ENCODE measurements at regions of chr12 and their contacts with region 1.

Region 1: GRCh38 chr12:1594261-1595025 is at the start of gene FBXL14:
- DNase-seq: peak; percentile 93
- ATAC-seq: peak; percentile 57
- H3K4me3 Mint-ChIP-seq: peak within 1 kb of the TSS; percentile 98
- H3K27ac Mint-ChIP-seq: peak within 1 kb of the TSS; percentile 93
- H3K4me1 Mint-ChIP-seq: peaks cover 38% of the 10 kb centered on the region
- H3K27me3 Mint-ChIP-seq: no peaks in the 10 kb centered on the region
- total RNA-seq, gene FBXL14: 17.0 to 17.8 TPM

Region 2: GRCh38 chr12:389139-390096 is 1205.0 kb before region 1 on chr12 and contains the start of gene KDM5A:
- CTCF ChIA-PET with region 1: no interaction called
- POLR2A ChIA-PET with region 1: no interaction called
- intact Hi-C with region 1: loop called (anchors 2 to 5 kb)
- DNase-seq: peak; percentile 94
- ATAC-seq: peak; percentile 94
- H3K4me3 Mint-ChIP-seq: peak within 1 kb of the TSS; percentile 89
- H3K27ac Mint-ChIP-seq: peak within 1 kb of the TSS; percentile 96
- H3K4me1 Mint-ChIP-seq: peaks cover 26% of the 10 kb centered on the region
- H3K27me3 Mint-ChIP-seq: no peaks in the 10 kb centered on the region
- total RNA-seq, gene KDM5A: 40.3 to 58.7 TPM

Region 3: GRCh38 chr12:569803-570434 is 1024.5 kb before region 1 on chr12:
- CTCF ChIA-PET with region 1: no interaction called
- POLR2A ChIA-PET with region 1: no interaction called
- intact Hi-C with region 1: loop called (anchors 5 to 10 kb)
- DNase-seq: peak; percentile 94
- ATAC-seq: peak; percentile 89
- H3K4me3 Mint-ChIP-seq: peak overlapping the region; percentile 74
- H3K27ac Mint-ChIP-seq: peak overlapping the region; percentile 85
- H3K4me1 Mint-ChIP-seq: peaks cover 65% of the 10 kb centered on the region
- H3K27me3 Mint-ChIP-seq: no peaks in the 10 kb centered on the region

Region 4: DNA sequence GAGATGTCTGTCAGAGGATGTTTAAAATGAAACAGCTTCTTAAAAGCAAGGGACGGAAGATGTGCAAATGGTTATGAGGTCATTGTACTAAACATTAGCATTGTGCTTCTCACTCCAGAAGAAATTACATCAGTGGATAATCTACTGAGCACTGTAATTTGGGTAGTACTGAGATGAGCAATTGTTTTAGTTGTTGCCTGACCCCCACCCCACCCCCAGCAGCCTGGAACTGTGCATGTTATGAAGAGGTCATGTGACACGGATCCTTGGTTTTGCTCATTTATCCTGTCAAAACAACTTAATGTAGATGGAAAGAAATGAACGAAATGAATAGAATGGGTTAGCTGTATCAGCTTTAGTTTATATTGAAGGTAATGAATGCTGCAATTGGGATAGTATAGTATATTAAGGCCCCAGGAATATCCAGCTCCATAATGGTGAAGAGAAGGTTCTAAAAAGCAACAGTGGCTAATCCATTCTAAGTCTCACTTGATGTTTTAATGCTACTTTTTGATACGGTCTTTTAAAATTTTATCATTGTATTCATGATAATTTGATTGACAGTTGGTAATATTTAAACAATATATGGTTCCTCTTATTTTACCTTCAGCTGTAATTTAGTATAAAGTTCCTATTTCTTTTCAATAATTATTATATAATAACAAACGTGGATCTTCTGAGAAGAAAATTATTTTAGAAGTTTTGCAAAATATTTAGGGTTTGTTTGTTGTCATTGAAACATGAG is 783.6 kb before region 1 on chr12:
- CTCF ChIA-PET with region 1: no interaction called
- POLR2A ChIA-PET with region 1: no interaction called
- intact Hi-C with region 1: loop called in 1 of 2 experiments (anchors 5 kb)
- DNase-seq: peak; percentile 84
- ATAC-seq: peak; percentile 95
- H3K4me3 Mint-ChIP-seq: peak overlapping the region; percentile 32
- H3K27ac Mint-ChIP-seq: peak overlapping the region; percentile 78
- H3K4me1 Mint-ChIP-seq: peaks cover 68% of the 10 kb centered on the region
- H3K27me3 Mint-ChIP-seq: no peaks in the 10 kb centered on the region

Region 5: DNA sequence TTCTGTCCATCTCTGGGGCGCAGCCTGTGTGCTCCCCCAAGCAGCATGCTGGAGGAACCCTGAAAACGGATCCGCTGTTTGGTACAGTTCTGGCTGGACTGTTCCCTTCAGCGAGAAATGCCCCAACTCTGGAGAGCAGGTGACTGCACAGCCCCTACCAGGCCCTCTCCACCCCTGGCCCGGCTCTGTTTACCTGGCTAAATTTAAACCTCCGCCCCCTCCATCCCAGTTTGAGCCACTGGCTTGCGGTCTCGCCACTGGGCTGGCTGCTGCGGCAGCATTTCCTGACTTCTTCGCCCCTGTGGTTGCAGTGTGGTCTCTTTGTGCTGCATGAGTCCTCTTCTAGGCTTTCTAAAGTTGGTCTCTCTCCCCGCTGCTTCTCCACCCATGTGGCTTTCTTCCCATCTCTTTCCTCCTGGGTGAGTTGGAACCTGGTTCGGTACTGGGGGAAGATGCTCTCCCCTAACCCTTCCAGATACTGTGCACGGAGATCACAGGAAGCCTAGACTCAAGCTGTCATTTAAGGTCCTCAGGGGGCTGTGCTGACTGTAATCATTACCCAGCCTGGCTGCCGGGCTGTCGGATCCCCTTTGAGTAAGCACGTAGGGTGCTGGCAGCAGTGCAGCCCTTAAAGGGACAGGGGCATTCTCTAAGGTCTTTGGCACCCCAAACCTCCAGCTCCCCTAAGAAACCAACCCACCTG is 60.7 kb before region 1 on chr12:
- CTCF ChIA-PET with region 1: interaction called, 3 read pairs
- POLR2A ChIA-PET with region 1: no interaction called
- intact Hi-C with region 1: loop called in 1 of 2 experiments (anchors 5 kb)
- DNase-seq: peak; percentile 77
- ATAC-seq: peak; percentile 85
- H3K4me3 Mint-ChIP-seq: peak overlapping the region; percentile 50
- H3K27ac Mint-ChIP-seq: no peak overlapping the region
- H3K4me1 Mint-ChIP-seq: peaks cover 32% of the 10 kb centered on the region
- H3K27me3 Mint-ChIP-seq: peaks cover 60% of the 10 kb centered on the region

Region 6: GRCh38 chr12:1605129-1606020 is 10.9 kb after region 1 on chr12:
- CTCF ChIA-PET with region 1: interaction called, 25 read pairs
- POLR2A ChIA-PET with region 1: interaction called, 3 read pairs
- intact Hi-C with region 1: no loop called
- DNase-seq: peak; percentile 70
- ATAC-seq: peak; percentile 60
- H3K4me3 Mint-ChIP-seq: peak overlapping the region; percentile 68
- H3K27ac Mint-ChIP-seq: peak overlapping the region; percentile 72
- H3K4me1 Mint-ChIP-seq: peaks cover 44% of the 10 kb centered on the region
- H3K27me3 Mint-ChIP-seq: no peaks in the 10 kb centered on the region